Activated CD8-positive, alpha-beta T cell treated with anti-CD3 and anti-CD28 coated beads for 36 hours (primary cell): ENCODE measurements at regions of chr3 and their contacts with region 1.

Region 1: GRCh38 chr3:155859859-155860258 is 5.6 kb upstream of the SLC33A1 start:
- DNase-seq: no peak
- ATAC-seq: no peak
- H3K4me3 Mint-ChIP-seq: no peak overlapping the region
- H3K27ac Mint-ChIP-seq: no peak overlapping the region
- H3K4me1 Mint-ChIP-seq: peaks cover 19% of the 10 kb centered on the region
- H3K27me3 Mint-ChIP-seq: no peaks in the 10 kb centered on the region
- CTCF ChIP-seq: no peak

Region 2: DNA sequence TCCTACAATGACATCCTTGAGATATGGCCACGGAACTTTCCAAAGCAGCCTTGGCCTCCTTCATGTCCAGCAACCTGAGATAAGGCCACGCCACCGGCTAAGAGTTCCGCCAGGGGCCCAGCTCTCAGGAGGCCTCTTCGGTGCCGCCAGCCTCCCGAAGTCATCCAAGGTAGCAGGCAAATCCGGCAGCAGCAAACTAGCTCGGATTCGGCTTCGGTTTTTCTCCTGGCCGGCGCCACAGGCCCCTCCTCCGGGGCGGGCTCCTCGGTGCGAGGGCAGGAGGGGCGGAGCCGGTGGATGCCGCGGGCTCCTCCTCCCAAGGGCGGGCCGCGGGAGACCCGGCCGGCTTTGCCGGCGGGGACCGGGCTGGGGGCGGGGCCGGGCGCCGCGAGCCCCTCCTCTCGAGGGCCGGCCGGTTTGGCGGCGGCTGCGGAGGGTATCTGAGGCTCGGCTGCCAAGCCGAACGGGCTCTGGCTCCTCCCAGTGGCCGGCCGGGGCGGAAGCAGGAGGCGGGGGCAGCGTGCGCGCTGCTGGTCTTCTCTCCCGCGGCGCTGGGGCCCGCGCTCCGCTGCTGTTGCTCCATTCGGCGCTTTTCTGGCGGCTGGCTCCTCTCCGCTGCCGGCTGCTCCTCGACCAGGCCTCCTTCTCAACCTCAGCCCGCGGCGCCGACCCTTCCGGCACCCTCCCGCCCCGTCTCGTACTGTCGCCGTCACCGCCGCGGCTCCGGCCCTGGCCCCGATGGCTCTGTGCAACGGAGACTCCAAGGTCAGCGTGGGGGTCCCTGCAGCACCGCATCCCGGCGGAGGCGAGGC is 10.5 kb after region 1 on chr3 and contains the start of gene GMPS:
- CTCF ChIA-PET with region 1: interaction called, 3 read pairs
- POLR2A ChIA-PET with region 1: interaction called, 13 read pairs
- intact Hi-C with region 1: no loop called
- DNase-seq: peak; percentile 94
- ATAC-seq: peak; percentile 94
- H3K4me3 Mint-ChIP-seq: peak within 1 kb of the TSS; percentile 87
- H3K27ac Mint-ChIP-seq: peak within 1 kb of the TSS; percentile 93
- H3K4me1 Mint-ChIP-seq: peaks cover 20% of the 10 kb centered on the region
- H3K27me3 Mint-ChIP-seq: no peaks in the 10 kb centered on the region
- CTCF ChIP-seq: no peak
- total RNA-seq, gene GMPS: 143 to 148 TPM